HepG2 (cell line): ENCODE measurements at regions of chr2 and their contacts with region 1.

Region 1: DNA sequence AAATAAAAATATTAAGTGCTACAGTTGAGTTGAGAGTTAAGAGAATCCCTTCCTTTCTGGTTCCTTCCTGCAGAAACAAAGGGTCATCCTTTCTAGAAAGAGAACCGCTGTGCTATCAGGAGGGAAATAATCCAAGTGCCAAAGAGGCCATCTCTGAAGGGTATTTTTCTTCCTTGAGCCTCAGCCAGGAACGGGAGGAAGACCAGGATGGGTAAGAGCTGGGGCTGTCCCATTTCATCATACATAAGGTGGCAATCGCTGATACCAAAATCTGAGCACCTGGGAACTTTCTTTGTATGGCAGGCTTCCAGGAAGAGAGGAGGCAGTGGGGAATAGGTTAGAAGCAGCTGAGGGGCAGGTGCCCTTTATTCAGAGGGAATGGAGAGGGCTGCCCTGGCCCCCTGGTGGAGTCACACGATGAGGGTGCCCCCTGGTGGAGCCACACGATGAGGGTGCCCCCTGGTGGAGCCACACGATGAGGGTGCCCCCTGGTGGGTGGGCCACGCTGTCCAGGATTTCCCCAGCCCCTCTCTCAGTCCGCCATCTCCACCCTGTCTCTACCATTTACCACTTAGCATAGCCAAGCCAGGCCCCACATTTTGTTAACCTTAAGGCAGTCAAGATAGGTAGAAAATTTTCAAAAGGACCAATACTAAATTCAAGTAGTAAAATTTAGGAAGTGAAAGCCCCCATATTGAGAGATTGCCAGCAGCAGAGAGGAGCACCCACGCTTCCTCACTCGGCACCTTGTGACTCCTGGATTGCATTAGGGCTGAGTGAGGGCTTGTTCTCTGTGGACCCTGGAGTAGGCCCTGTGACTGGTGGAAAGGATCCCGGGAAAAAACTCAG is 10.5 kb upstream of the FAM228A start:
- DNase-seq: peak; percentile 41
- ATAC-seq: peak; percentile 98
- H3K4me3 ChIP-seq: no peak overlapping the region
- H3K27ac ChIP-seq: no peak overlapping the region
- H3K4me1 ChIP-seq: no peaks in the 10 kb centered on the region
- H3K27me3 ChIP-seq: peaks cover 2 to 21% of the 10 kb centered on the region in 2 experiments; a peak in 3 of 5 replicates
- CTCF ChIP-seq: peak; percentile 92; the same call in 1 of the 2 replicates
- EP300 ChIP-seq: no peak
- POLR2A ChIP-seq: no peak
- RAD21 ChIP-seq: peak; percentile 97

Region 2: DNA sequence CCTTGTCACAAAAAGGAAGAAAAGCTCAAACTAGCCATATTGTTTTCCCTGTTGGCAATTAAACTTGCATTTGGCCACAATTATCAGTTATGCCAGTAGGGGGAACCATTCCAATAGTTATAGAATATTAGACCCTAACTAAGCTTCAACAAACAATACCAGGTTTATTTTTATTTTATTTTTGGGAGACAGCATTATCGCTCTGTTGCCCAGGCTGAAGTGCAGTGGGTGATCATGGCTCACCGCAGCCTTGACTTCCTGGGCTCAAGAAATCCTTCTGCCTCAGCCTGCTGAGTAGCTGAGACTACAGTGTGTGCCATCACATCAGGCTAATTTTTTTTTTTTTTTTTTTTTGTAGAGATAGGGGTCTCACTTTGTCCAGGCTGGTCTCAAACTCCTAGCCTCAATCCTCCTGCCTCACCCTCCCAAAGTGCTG is 339.6 kb before region 1 on chr2:
- CTCF ChIA-PET with region 1: interaction called, 20 read pairs
- POLR2A ChIA-PET with region 1: no interaction called
- in situ Hi-C with region 1: loop called (anchors 10 kb)
- intact Hi-C with region 1: loop called (anchors 1 kb)
- DNase-seq: peak; percentile 51
- ATAC-seq: peak; percentile 78
- H3K4me3 ChIP-seq: no peak overlapping the region
- H3K27ac ChIP-seq: no peak overlapping the region
- H3K4me1 ChIP-seq: peaks cover 8% of the 10 kb centered on the region
- H3K27me3 ChIP-seq: no peaks in the 10 kb centered on the region
- CTCF ChIP-seq: peak; percentile 77
- EP300 ChIP-seq: no peak
- POLR2A ChIP-seq: no peak
- RAD21 ChIP-seq: peak; percentile 47; the same call in 1 of the 2 replicates

Region 3: DNA sequence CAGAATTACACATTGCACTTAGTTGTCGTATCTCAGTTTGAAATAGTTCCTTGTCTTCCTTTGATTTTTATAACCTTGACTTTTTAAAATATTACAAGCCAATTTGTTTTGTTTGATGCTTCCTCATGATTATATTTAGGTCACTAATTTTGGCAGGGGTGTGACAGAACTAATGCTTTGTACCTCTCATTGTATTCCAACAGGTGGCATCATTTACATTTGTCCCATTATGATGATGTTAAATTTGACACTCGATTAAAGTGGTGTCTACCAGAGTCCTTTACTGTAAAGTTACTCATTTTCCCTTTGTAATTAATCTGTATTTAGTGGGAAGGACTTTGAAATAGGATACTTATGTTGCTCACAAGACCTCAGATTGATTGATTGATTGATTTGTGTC is 176.0 kb before region 1 on chr2:
- CTCF ChIA-PET with region 1: interaction called, 14 read pairs
- POLR2A ChIA-PET with region 1: no interaction called
- in situ Hi-C with region 1: no loop called
- intact Hi-C with region 1: no loop called
- DNase-seq: peak; percentile 13
- ATAC-seq: peak; percentile 54; the same call in 2 of the 3 replicates
- H3K4me3 ChIP-seq: no peak overlapping the region
- H3K27ac ChIP-seq: no peak overlapping the region
- H3K4me1 ChIP-seq: no peaks in the 10 kb centered on the region
- H3K27me3 ChIP-seq: no peaks in the 10 kb centered on the region
- CTCF ChIP-seq: peak; percentile 52
- EP300 ChIP-seq: no peak
- POLR2A ChIP-seq: no peak
- RAD21 ChIP-seq: no peak

Region 4: GRCh38 chr2:24021193-24021998 is 143.0 kb before region 1 on chr2:
- CTCF ChIA-PET with region 1: interaction called, 36 read pairs
- POLR2A ChIA-PET with region 1: no interaction called
- in situ Hi-C with region 1: loop called (anchors 10 kb)
- intact Hi-C with region 1: loop called (anchors 1 kb)
- DNase-seq: peak; percentile 61
- ATAC-seq: peak; percentile 84
- H3K4me3 ChIP-seq: no peak overlapping the region
- H3K27ac ChIP-seq: peak overlapping the region; percentile 41
- H3K4me1 ChIP-seq: peaks cover 43% of the 10 kb centered on the region
- H3K27me3 ChIP-seq: no peaks in the 10 kb centered on the region
- CTCF ChIP-seq: peak; percentile 95
- EP300 ChIP-seq: no peak
- POLR2A ChIP-seq: no peak
- RAD21 ChIP-seq: peak; percentile 97

Region 5: GRCh38 chr2:24075915-24076848 is 88.2 kb before region 1 on chr2 and contains the start of gene SF3B6:
- CTCF ChIA-PET with region 1: interaction called, 10 read pairs
- POLR2A ChIA-PET with region 1: no interaction called
- in situ Hi-C with region 1: loop called (anchors 10 kb)
- intact Hi-C with region 1: no loop called
- DNase-seq: peak; percentile 99
- ATAC-seq: peak; percentile 95
- H3K4me3 ChIP-seq: peak within 1 kb of the TSS; percentile 76 to 100 (median 94)
- H3K27ac ChIP-seq: peak within 1 kb of the TSS; percentile 59
- H3K4me1 ChIP-seq: peaks cover 15% of the 10 kb centered on the region
- H3K27me3 ChIP-seq: no peaks in the 10 kb centered on the region; a peak in 1 of 5 replicates
- CTCF ChIP-seq: peak; percentile 52
- EP300 ChIP-seq: peak; percentile 17 to 78; a peak in 2 of 4 replicates
- POLR2A ChIP-seq: peak; percentile 80 to 91
- RAD21 ChIP-seq: peak; percentile 55
- total RNA-seq, gene SF3B6: 182 and 254 TPM in 2 replicates

Region 6: DNA sequence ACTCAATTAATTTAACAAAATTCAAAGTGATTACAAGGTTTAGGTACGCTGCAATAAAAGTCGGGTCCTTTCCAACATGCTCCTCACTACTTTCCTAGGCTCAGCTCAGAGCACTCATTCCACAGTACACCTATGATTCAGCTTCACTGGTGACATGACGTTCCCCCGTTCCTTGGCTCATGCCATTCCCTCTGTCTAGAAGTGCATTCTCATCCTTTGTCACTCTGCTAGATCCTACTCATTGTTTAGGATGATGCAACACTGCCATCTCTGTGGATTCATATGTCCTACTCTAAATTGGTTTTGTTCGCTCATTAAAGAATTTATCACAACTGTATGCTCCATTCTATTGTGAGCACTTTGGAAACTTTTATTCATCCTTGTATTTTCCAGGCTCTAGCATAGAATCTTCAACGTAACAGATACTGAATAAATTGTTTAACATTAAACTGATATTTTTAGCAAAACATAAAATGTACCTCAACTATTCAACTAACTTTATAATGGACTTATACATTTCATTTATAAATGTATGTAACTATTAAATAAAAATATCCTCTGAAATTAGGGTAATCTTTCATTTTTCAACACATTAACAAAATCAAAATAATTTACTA is 89.1 kb after region 1 on chr2:
- CTCF ChIA-PET with region 1: no interaction called
- POLR2A ChIA-PET with region 1: no interaction called
- in situ Hi-C with region 1: no loop called
- intact Hi-C with region 1: no loop called
- DNase-seq: no peak
- ATAC-seq: no peak
- H3K4me3 ChIP-seq: no peak overlapping the region
- H3K27ac ChIP-seq: no peak overlapping the region
- H3K4me1 ChIP-seq: no peaks in the 10 kb centered on the region
- H3K27me3 ChIP-seq: no peaks in the 10 kb centered on the region
- CTCF ChIP-seq: no peak
- EP300 ChIP-seq: no peak
- POLR2A ChIP-seq: no peak
- RAD21 ChIP-seq: no peak

Region 7: GRCh38 chr2:24418166-24418841 is 254.0 kb after region 1 on chr2:
- CTCF ChIA-PET with region 1: no interaction called
- POLR2A ChIA-PET with region 1: no interaction called
- in situ Hi-C with region 1: no loop called
- intact Hi-C with region 1: no loop called
- DNase-seq: no peak
- ATAC-seq: peak; percentile 38; the same call in 2 of the 3 replicates
- H3K4me3 ChIP-seq: no peak overlapping the region
- H3K27ac ChIP-seq: no peak overlapping the region
- H3K4me1 ChIP-seq: no peaks in the 10 kb centered on the region
- H3K27me3 ChIP-seq: 0 out of 5 replicates have a peak, but pooled peaks cover 0 to 4% of the 10 kb centered on the region in 2 experiments
- CTCF ChIP-seq: no peak
- EP300 ChIP-seq: no peak
- POLR2A ChIP-seq: no peak
- RAD21 ChIP-seq: no peak